ENCODE measurements at regions of chr1 and their contacts with region 1.

Region 1: GRCh38 chr1:84996846-84997666 is at the start of gene MCOLN2:
- DNase-seq: no peak
- ATAC-seq: peak; percentile 71
- H3K4me3 ChIP-seq: peak within 1 kb of the TSS; percentile 95
- H3K27ac ChIP-seq: peak within 1 kb of the TSS; percentile 99
- H3K4me1 ChIP-seq: 0 out of 2 replicates have a peak, but pooled peaks cover 4% of the 10 kb centered on the region
- H3K27me3 ChIP-seq: no peaks in the 10 kb centered on the region
- CTCF ChIP-seq: 0 out of 6 replicates have a peak, but pooled peaks of 1 of the 3 experiments have one; percentile 4
- EP300 ChIP-seq: no peak
- POLR2A ChIP-seq: peak; percentile 86
- RAD21 ChIP-seq: no peak
- polyA plus RNA-seq, gene MCOLN2: 25.9 to 46.7 TPM

Region 2: DNA sequence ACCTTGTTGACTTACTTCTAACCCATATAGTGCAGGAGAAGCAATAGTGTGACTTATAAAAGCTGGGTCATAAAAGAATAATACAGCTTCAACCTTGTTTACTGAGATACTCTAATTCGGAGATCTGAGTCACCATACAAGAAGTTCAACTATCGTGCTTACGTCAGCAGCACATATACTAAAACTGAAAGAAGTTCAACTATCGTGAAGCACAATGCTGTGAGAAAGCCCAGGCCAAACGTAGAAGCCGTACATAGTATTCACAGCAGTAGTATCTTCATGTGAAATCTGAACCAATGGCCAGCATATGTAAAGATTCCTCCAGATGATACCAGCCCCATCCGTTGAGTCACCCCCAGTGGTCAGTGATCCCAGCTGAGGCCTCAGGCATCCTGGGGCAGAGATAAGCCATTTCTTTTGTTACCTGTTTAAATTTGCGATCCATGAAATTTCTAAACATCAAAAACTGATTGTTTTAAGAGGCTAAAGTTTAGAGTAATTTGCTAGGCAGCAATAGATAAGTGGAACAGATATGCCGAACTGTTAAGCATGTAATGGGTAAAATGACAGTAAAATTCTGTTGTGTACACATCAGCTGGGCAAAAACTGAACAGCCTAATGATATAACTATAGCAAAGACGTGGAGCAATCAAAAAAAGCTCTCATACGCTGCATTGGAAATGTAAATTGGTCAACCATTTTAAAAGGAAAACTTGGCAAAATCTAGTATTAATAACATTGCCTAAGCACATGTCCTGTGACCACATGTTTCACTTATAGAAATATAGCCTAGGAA is 749.4 kb before region 1 on chr1:
- CTCF ChIA-PET with region 1: no interaction called
- POLR2A ChIA-PET with region 1: no interaction called
- RAD21 ChIA-PET with region 1: no interaction called
- SMC1A ChIA-PET with region 1: no interaction called
- in situ Hi-C with region 1: no loop called
- intact Hi-C with region 1: no loop called
- DNase-seq: no peak
- ATAC-seq: peak; percentile 53
- H3K4me3 ChIP-seq: no peak overlapping the region
- H3K27ac ChIP-seq: no peak overlapping the region
- H3K4me1 ChIP-seq: no peaks in the 10 kb centered on the region
- H3K27me3 ChIP-seq: no peaks in the 10 kb centered on the region
- CTCF ChIP-seq: no peak
- EP300 ChIP-seq: no peak
- POLR2A ChIP-seq: no peak
- RAD21 ChIP-seq: no peak

Region 3: DNA sequence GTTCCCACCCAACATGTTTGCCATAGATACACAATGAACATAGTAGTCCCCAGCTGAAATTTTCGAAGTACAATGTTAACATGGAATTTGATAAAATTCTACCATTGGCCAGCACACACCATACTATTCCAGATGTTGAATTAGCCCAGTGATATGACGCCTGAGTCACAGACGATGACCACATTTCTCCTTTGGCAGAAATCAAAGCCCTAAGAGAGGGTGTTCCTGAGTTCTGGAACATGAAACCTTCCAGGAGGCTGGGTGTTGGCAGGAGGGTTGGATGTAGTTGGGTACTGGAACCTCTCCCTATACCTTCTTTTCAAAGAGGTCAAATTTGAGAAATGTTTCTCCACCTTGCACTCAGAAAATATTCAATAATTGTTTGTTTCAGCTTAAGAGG is 141.9 kb before region 1 on chr1:
- CTCF ChIA-PET with region 1: no interaction called
- POLR2A ChIA-PET with region 1: no interaction called
- RAD21 ChIA-PET with region 1: no interaction called
- SMC1A ChIA-PET with region 1: no interaction called
- in situ Hi-C with region 1: no loop called
- intact Hi-C with region 1: no loop called
- DNase-seq: no peak
- ATAC-seq: no peak
- H3K4me3 ChIP-seq: no peak overlapping the region
- H3K27ac ChIP-seq: peak overlapping the region; percentile 3; the same call in 1 of the 2 replicates
- H3K4me1 ChIP-seq: peaks cover 22% of the 10 kb centered on the region
- H3K27me3 ChIP-seq: no peaks in the 10 kb centered on the region
- CTCF ChIP-seq: no peak
- EP300 ChIP-seq: no peak
- POLR2A ChIP-seq: no peak
- RAD21 ChIP-seq: no peak

Region 4: GRCh38 chr1:84959294-84959693 is 37.8 kb before region 1 on chr1:
- CTCF ChIA-PET with region 1: interaction called, 8 read pairs
- POLR2A ChIA-PET with region 1: interaction called, 25 read pairs
- RAD21 ChIA-PET with region 1: interaction called, 25 read pairs
- SMC1A ChIA-PET with region 1: interaction called, 41 read pairs
- in situ Hi-C with region 1: no loop called
- intact Hi-C with region 1: no loop called
- DNase-seq: peak; percentile 68
- ATAC-seq: peak; percentile 94
- H3K4me3 ChIP-seq: no peak overlapping the region
- H3K27ac ChIP-seq: peak overlapping the region; percentile 62
- H3K4me1 ChIP-seq: peaks cover 10% of the 10 kb centered on the region
- H3K27me3 ChIP-seq: no peaks in the 10 kb centered on the region
- CTCF ChIP-seq: no peak
- EP300 ChIP-seq: peak; percentile 85 to 91
- POLR2A ChIP-seq: 0 out of 2 replicates have a peak, but pooled peaks have one; percentile 33
- RAD21 ChIP-seq: peak; percentile 21; the same call in 1 of the 2 replicates

Region 5: GRCh38 chr1:84973498-84974334 is 23.3 kb before region 1 on chr1:
- CTCF ChIA-PET with region 1: interaction called, 49 read pairs
- POLR2A ChIA-PET with region 1: interaction called, 69 read pairs
- RAD21 ChIA-PET with region 1: interaction called, 56 read pairs
- SMC1A ChIA-PET with region 1: interaction called, 132 read pairs
- in situ Hi-C with region 1: no loop called
- intact Hi-C with region 1: loop called (anchors 1 kb)
- DNase-seq: no peak
- ATAC-seq: peak; percentile 54
- H3K4me3 ChIP-seq: peak overlapping the region; percentile 60
- H3K27ac ChIP-seq: peak overlapping the region; percentile 85
- H3K4me1 ChIP-seq: peaks cover 56% of the 10 kb centered on the region
- H3K27me3 ChIP-seq: no peaks in the 10 kb centered on the region
- CTCF ChIP-seq: peak in 1 of 3 experiments; percentile 31; a peak in 2 of 6 replicates
- EP300 ChIP-seq: no peak
- POLR2A ChIP-seq: no peak
- RAD21 ChIP-seq: peak; percentile 41; the same call in 1 of the 2 replicates

Region 6: DNA sequence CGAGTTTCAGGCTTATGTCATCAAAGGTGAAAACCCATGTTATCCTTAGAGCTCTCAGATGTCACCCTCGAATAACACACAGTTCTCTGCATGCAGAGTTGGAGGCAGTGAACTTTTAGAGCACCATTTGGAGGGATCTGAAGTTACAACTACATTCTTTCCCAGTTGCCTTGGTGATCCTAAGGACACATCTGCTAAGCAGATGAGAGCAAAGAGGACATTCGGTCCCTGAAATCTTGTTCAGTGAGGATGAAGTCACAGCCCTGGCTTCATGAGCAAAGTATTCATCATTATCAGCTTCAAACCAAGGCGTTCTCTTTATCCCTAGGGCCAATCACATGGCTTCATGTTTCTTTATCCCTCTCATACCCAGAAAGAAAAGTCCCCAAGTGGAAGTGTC is 22.9 kb after region 1 on chr1:
- CTCF ChIA-PET with region 1: interaction called, 7 read pairs
- POLR2A ChIA-PET with region 1: interaction called, 4 read pairs
- RAD21 ChIA-PET with region 1: interaction called, 62 read pairs
- SMC1A ChIA-PET with region 1: interaction called, 36 read pairs
- in situ Hi-C with region 1: no loop called
- intact Hi-C with region 1: no loop called
- DNase-seq: no peak
- ATAC-seq: no peak
- H3K4me3 ChIP-seq: no peak overlapping the region
- H3K27ac ChIP-seq: no peak overlapping the region
- H3K4me1 ChIP-seq: no peaks in the 10 kb centered on the region
- H3K27me3 ChIP-seq: no peaks in the 10 kb centered on the region
- CTCF ChIP-seq: no peak
- EP300 ChIP-seq: no peak
- POLR2A ChIP-seq: no peak
- RAD21 ChIP-seq: no peak

Region 7: GRCh38 chr1:85027242-85027983 is 30.4 kb after region 1 on chr1:
- CTCF ChIA-PET with region 1: interaction called, 22 read pairs
- POLR2A ChIA-PET with region 1: interaction called, 4 read pairs
- RAD21 ChIA-PET with region 1: interaction called, 62 read pairs
- SMC1A ChIA-PET with region 1: interaction called, 36 read pairs
- in situ Hi-C with region 1: no loop called
- intact Hi-C with region 1: loop called (anchors 2 kb)
- DNase-seq: no peak
- ATAC-seq: peak; percentile 96
- H3K4me3 ChIP-seq: no peak overlapping the region
- H3K27ac ChIP-seq: no peak overlapping the region
- H3K4me1 ChIP-seq: no peaks in the 10 kb centered on the region
- H3K27me3 ChIP-seq: no peaks in the 10 kb centered on the region
- CTCF ChIP-seq: peak; percentile 31 to 62 (median 33); a peak in 4 of 6 replicates
- EP300 ChIP-seq: no peak
- POLR2A ChIP-seq: no peak
- RAD21 ChIP-seq: peak; percentile 72